Activated T-helper 1 cell treated with anti-CD3 and anti-CD28 coated beads, Interleukin-12 subunit alpha, Interleukin-12 subunit beta, Interleukin-2, Interleukin-4 antibody, amounts not matched to agents 30 ng/mL and 10 ng/mL and 1 ng/mL, durations not matched to agents 14 hours and 24 hours and 36 hours (primary cell): ENCODE measurements at regions of chr5 and their contacts with region 1.

Region 1: DNA sequence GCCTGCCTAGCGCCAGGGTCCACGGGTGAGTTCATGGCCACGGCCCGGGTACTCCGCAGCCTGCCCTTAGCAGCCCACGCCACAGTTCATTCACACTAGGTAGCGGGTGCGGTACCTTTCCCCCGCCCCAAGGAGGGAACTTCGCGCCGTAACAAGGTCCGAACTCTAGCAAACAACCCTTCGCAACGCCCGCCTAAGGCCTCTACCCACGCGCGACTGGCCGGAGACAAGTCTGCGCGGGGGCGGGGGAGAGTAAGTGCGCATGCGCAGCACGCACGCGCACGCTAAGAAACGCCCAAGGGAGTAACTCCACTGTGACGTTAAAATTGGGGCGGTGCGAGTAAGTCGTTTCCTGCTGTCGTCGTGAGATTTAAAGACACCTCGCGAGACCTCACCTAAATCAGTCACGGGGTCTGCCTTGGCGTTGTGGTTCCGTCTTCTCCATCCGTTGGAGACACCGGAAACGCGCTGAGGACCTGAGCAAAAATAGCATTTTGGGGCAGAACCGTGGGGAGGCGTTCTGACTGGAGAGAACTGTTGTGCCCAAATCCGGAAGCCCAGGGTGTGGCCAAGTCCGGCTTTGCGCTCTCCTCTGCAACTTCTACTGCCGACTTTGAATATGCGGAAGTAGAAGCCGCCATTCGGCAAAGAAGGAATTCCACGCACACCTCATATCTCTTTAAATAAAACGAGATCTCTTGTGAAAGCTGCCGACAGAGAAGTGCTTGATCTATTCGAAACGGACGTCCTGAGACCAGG is at the start of gene RAPGEF6:
- DNase-seq: peak; percentile 97
- H3K4me3 Mint-ChIP-seq: peak within 1 kb of the TSS; percentile 98
- H3K27ac Mint-ChIP-seq: peak within 1 kb of the TSS; percentile 97
- H3K4me1 Mint-ChIP-seq: peaks cover 33% of the 10 kb centered on the region
- H3K27me3 Mint-ChIP-seq: no peaks in the 10 kb centered on the region
- total RNA-seq, gene RAPGEF6: 36.7 and 42.8 TPM in 2 replicates

Region 2: DNA sequence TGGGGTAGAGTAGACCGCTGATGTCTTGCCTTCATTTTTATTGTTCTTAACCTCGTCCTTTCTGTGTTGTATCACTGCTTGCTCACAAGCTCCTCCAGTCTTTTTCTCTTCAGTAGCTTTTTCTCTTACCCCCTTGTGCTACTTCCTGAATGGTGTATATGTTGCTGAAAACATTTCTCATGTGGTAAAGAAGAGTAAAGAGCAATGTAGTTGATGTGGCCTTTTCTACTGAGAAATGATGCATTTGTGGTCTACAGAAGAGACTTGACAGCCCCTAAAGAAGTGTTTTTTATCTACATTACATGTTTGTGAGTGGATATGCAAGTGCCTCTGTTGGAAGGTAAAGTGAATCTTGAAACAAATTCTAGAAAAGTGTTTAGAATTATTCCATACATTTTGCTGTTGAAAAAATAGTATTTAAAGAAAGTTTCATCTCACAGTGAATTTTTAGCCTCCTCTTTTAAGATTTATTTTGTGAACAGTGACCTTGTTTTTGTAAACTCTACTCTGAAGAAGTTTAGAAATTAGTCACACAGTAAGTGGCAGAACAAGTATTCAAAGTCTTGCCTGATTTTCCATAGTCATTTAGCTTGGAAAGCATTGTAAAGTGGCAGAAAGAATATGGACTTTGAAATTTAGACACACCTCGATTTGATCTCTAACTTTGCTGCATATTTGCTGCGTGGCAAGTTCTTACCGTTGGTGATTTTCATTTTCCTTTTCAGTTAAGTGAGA is 353.9 kb before region 1 on chr5:
- intact Hi-C with region 1: loop called (anchors 10 kb)
- DNase-seq: no peak
- H3K4me3 Mint-ChIP-seq: peak overlapping the region; percentile 86
- H3K27ac Mint-ChIP-seq: peak overlapping the region; percentile 91
- H3K4me1 Mint-ChIP-seq: peaks cover 78% of the 10 kb centered on the region
- H3K27me3 Mint-ChIP-seq: peaks cover 5% of the 10 kb centered on the region

Region 3: DNA sequence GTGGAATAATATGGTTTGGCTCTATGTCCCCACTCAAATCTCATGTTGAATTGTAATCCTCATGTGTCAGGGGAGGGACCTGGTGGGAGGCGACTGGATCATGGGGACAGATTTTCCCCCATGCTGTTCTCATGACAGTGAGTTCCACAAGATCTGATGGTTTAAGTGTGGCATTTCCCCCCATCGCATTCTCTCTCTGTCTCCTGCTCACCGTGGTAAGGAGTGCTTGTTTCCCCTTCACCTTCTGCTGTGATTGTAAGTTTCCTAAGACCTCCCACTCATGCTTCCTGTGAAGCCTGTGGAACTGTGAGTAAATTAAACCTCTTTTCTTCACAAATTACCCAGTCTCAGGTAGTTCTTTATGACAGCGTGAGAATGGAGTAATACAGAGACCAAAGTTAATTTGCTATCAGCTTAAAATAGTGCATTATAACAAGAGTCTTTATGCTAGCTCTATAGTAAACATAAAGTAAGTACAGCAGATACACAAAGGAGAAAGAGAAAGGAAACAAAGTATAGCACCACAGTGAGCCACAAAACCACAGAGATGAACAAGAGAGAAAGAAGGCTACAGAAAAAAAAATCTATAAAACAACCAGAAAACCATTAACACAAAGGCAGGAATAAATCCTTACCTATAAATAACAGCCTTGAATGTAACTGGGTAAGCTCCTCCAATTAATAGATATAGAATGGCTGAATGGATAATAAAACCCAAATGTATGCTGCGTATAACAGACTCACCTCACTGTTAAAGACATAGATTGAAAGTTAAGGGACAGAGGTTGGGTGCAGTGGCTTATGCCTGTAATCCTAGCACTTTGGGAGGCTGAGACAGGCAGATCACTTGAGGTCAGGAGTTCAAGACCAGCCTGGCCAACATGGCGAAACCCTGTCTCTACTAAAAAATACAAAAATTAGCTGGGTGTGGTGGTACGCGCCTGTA is 39.8 kb before region 1 on chr5:
- intact Hi-C with region 1: loop called (anchors 1 kb)
- DNase-seq: peak; percentile 19
- H3K4me3 Mint-ChIP-seq: peak overlapping the region; percentile 61
- H3K27ac Mint-ChIP-seq: peak overlapping the region; percentile 82
- H3K4me1 Mint-ChIP-seq: peaks cover 39% of the 10 kb centered on the region
- H3K27me3 Mint-ChIP-seq: no peaks in the 10 kb centered on the region

Region 4: DNA sequence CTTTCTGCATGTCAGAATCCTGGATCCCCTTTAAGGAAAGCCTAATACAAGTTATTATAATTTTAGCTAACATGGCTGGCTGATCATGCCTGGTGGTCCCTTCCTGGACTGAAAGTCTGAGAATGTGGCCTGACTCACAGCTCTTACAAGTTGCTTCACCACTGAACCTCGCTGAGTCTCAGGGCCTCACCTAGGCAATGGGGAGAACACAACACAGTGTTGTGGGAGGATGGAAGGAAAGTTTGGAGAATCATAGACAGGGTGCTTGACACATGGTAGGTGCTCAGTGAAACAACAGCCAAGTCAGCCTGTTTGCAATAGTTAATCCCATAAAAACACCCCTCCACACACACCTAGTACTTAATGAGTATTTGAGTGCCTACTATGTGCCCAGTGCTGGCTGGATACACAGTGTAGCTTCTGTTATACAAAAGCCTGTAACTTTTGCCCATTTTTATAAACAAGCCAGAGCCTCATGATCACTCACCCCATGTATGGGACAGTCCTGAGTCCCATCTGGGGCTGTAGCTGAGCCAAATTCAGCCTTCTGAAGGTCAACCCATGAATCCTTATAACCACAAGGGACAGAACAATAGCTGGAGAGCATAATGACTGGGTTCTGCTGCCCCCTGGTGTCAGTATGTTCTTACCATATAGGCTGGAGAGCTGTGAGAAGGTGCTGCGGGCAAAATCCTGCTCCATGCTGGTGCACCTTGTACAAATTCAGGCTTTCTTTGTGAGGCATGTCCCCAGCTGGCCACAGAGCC is 372.4 kb after region 1 on chr5:
- intact Hi-C with region 1: loop called (anchors 2 kb)
- DNase-seq: peak; percentile 67
- H3K4me3 Mint-ChIP-seq: peak overlapping the region; percentile 7
- H3K27ac Mint-ChIP-seq: peak overlapping the region; percentile 35
- H3K4me1 Mint-ChIP-seq: peaks cover 44% of the 10 kb centered on the region
- H3K27me3 Mint-ChIP-seq: peaks cover 41% of the 10 kb centered on the region

Region 5: GRCh38 chr5:132490486-132491367 is 855.6 kb after region 1 on chr5 and contains the start of gene IRF1:
- intact Hi-C with region 1: loop called (anchors 1 kb)
- DNase-seq: peak; percentile 99
- H3K4me3 Mint-ChIP-seq: peak within 1 kb of the TSS; percentile 99
- H3K27ac Mint-ChIP-seq: peak within 1 kb of the TSS; percentile 95
- H3K4me1 Mint-ChIP-seq: peaks cover 76% of the 10 kb centered on the region
- H3K27me3 Mint-ChIP-seq: no peaks in the 10 kb centered on the region
- total RNA-seq, gene IRF1: 190 and 198 TPM in 2 replicates